PC-9 (cell line): ENCODE measurements at regions of chr2 and their contacts with region 1.

Region 1: GRCh38 chr2:237723602-237724001 is 75.0 kb upstream of the RBM44 start:
- DNase-seq: peak; percentile 67 to 70
- H3K4me3 ChIP-seq: no peak overlapping the region
- H3K27ac ChIP-seq: no peak overlapping the region
- H3K4me1 ChIP-seq: peaks cover 8% of the 10 kb centered on the region; the same call in 1 of the 2 replicates
- H3K27me3 ChIP-seq: no peaks in the 10 kb centered on the region
- CTCF ChIP-seq: no peak

Region 2: DNA sequence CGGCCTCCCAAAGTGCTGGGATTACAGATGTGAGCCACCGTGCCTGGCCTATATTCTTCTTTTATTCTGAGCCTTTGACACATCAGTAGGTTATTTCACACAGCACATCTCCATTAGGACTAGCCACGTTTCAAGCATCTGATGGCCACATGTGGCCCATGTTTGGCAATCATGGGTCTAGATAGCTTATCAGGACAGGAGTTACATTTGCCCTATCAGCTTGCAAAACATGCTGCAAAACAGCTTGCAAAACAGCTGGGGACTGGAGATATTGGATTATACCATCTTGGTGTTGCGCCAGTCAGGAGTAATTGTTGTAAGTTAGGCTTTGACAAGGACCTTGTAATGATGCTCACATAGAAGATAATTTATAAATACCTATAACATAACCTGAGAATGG is 1650.4 kb before region 1 on chr2:
- CTCF ChIA-PET with region 1: no interaction called
- POLR2A ChIA-PET with region 1: interaction called, 13 read pairs
- intact Hi-C with region 1: no loop called
- DNase-seq: no peak
- H3K4me3 ChIP-seq: no peak overlapping the region
- H3K27ac ChIP-seq: no peak overlapping the region
- H3K4me1 ChIP-seq: peaks cover 10% of the 10 kb centered on the region
- H3K27me3 ChIP-seq: no peaks in the 10 kb centered on the region
- CTCF ChIP-seq: no peak

Region 3: DNA sequence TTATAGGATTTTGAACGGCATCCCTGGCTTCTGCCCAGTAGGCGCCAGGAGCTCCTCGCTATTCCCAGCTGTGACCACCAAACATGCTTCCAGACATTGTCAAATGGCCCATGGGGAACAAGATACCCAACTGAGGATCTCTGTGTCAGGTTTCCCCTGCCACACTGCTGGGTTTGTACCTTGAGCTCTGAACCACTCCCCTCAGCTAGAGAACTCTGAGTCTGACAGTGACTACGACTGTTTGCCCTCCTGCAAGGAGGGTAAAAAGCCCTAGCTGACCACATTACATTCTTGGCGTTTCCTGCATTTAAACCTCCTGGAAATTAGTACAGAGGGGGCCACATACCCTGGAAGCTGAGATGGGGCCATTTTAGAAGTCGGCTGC is 83.8 kb before region 1 on chr2:
- CTCF ChIA-PET with region 1: interaction called, 13 read pairs
- POLR2A ChIA-PET with region 1: no interaction called
- intact Hi-C with region 1: no loop called
- DNase-seq: no peak
- H3K4me3 ChIP-seq: no peak overlapping the region
- H3K27ac ChIP-seq: no peak overlapping the region
- H3K4me1 ChIP-seq: no peaks in the 10 kb centered on the region
- H3K27me3 ChIP-seq: no peaks in the 10 kb centered on the region; the same call in 1 of the 2 replicates
- CTCF ChIP-seq: no peak